Activated T-helper 1 cell treated with anti-CD3 and anti-CD28 coated beads, Interleukin-12 subunit alpha, Interleukin-12 subunit beta, Interleukin-2, Interleukin-4 antibody, amounts not matched to agents 30 ng/mL and 10 ng/mL and 1 ng/mL, durations not matched to agents 14 hours and 24 hours and 36 hours (primary cell): ENCODE measurements at regions of chr6 and their contacts with region 1.

Region 1: DNA sequence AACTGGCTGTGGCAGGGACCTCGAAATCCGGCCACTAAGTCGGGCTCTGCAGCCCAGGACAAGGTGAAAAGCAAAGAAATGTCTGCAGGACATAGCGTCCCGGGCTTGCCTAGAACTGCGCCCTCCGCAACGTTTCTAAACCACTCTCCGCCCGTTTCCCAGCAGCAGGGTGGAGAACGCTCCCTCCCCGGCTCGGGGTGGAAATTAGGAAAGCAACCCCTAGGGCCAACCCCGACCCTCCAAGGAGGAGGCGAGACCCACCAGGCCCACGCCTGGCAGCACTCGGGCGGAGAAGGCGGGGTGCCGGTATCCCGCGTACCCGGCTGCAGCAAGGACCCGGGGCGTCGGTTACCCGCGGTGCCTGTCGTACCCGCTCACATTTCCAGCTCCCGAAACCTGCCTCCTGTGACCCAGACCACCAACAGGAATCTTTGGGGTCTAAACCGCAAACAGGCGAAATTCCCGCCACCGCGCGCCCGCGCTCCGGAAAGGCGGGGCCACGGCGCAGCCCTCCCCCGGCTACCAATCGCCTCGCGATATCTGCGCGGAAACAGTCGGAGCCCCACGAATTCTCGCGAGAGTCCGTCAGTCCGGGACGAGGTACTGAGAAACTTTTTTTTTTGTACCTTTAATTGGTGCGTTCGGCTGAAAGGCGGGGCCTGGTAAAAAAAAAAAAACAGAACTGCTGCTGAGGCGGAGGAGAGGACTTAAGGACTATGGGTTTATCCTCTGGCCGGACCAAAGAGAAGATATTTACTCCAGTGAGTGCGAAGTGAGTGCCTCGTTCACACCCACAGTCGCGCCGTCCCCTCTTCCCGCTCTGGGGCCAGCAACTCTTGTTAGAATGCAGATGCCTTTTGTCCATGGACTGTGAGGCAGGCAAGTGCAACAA is at the start of gene MMS22L:
- DNase-seq: peak; percentile 92
- H3K4me3 Mint-ChIP-seq: peak within 1 kb of the TSS; percentile 93
- H3K27ac Mint-ChIP-seq: peak within 1 kb of the TSS; percentile 80
- H3K4me1 Mint-ChIP-seq: peaks cover 28% of the 10 kb centered on the region
- H3K27me3 Mint-ChIP-seq: peaks cover 13% of the 10 kb centered on the region
- total RNA-seq, gene MMS22L: 49.7 and 57.1 TPM in 2 replicates

Region 2: GRCh38 chr6:95577304-95578105 is 1705.5 kb before region 1 on chr6 and contains the start of gene MANEA:
- intact Hi-C with region 1: loop called (anchors 1 kb)
- DNase-seq: peak; percentile 77
- H3K4me3 Mint-ChIP-seq: peak within 1 kb of the TSS; percentile 91
- H3K27ac Mint-ChIP-seq: peak within 1 kb of the TSS; percentile 98
- H3K4me1 Mint-ChIP-seq: peaks cover 46% of the 10 kb centered on the region
- H3K27me3 Mint-ChIP-seq: peaks cover 1% of the 10 kb centered on the region
- total RNA-seq, gene MANEA: 23.1 and 26.8 TPM in 2 replicates

Region 3: GRCh38 chr6:96213784-96214183 is 1069.2 kb before region 1 on chr6:
- intact Hi-C with region 1: no loop called
- DNase-seq: no peak
- H3K4me3 Mint-ChIP-seq: no peak overlapping the region
- H3K27ac Mint-ChIP-seq: no peak overlapping the region
- H3K4me1 Mint-ChIP-seq: no peaks in the 10 kb centered on the region
- H3K27me3 Mint-ChIP-seq: no peaks in the 10 kb centered on the region

Region 4: GRCh38 chr6:96837081-96837971 is 445.6 kb before region 1 on chr6 and contains the start of gene GPR63:
- intact Hi-C with region 1: loop called (anchors 1 kb)
- DNase-seq: peak; percentile 83
- H3K4me3 Mint-ChIP-seq: peak within 1 kb of the TSS; percentile 93
- H3K27ac Mint-ChIP-seq: peak within 1 kb of the TSS; percentile 73
- H3K4me1 Mint-ChIP-seq: peaks cover 41% of the 10 kb centered on the region
- H3K27me3 Mint-ChIP-seq: peaks cover 43% of the 10 kb centered on the region
- total RNA-seq, gene GPR63: 3.1 and 3.2 TPM in 2 replicates

Region 5: GRCh38 chr6:97068211-97068610 is 214.8 kb before region 1 on chr6:
- intact Hi-C with region 1: loop called (anchors 5 kb)
- DNase-seq: no peak
- H3K4me3 Mint-ChIP-seq: no peak overlapping the region
- H3K27ac Mint-ChIP-seq: no peak overlapping the region
- H3K4me1 Mint-ChIP-seq: peaks cover 9% of the 10 kb centered on the region
- H3K27me3 Mint-ChIP-seq: peaks cover 1% of the 10 kb centered on the region

Region 6: GRCh38 chr6:97269821-97270220 is 13.2 kb before region 1 on chr6:
- intact Hi-C with region 1: loop called (anchors 2 kb)
- DNase-seq: no peak
- H3K4me3 Mint-ChIP-seq: no peak overlapping the region
- H3K27ac Mint-ChIP-seq: no peak overlapping the region
- H3K4me1 Mint-ChIP-seq: peaks cover 5% of the 10 kb centered on the region
- H3K27me3 Mint-ChIP-seq: no peaks in the 10 kb centered on the region

Region 7: GRCh38 chr6:98947351-98948292 is 1664.7 kb after region 1 on chr6 and contains the start of gene FBXL4:
- intact Hi-C with region 1: loop called (anchors 5 kb)
- DNase-seq: peak; percentile 76
- H3K4me3 Mint-ChIP-seq: peak within 1 kb of the TSS; percentile 92
- H3K27ac Mint-ChIP-seq: peak within 1 kb of the TSS; percentile 97
- H3K4me1 Mint-ChIP-seq: peaks cover 24% of the 10 kb centered on the region
- H3K27me3 Mint-ChIP-seq: peaks cover 23% of the 10 kb centered on the region
- total RNA-seq, gene FBXL4: 13.1 and 13.3 TPM in 2 replicates